ENCODE measurements at regions of chr19 and their contacts with region 1.

Region 1: GRCh38 chr19:17305517-17306284 is at the start of gene MRPL34:
- H3K4me3 ChIP-seq: peak within 1 kb of the TSS; percentile 83
- H3K27ac ChIP-seq: peak within 1 kb of the TSS; percentile 76
- H3K4me1 ChIP-seq: peaks cover 3% of the 10 kb centered on the region
- CTCF ChIP-seq: peak; percentile 100

Region 2: GRCh38 chr19:17183858-17184321 is 121.8 kb before region 1 on chr19:
- CTCF ChIA-PET with region 1: no interaction called
- POLR2A ChIA-PET with region 1: no interaction called
- H3K4me3 ChIP-seq: no peak overlapping the region
- H3K27ac ChIP-seq: no peak overlapping the region
- H3K4me1 ChIP-seq: no peaks in the 10 kb centered on the region
- CTCF ChIP-seq: no peak

Region 3: GRCh38 chr19:17226002-17226933 is 79.4 kb before region 1 on chr19 and contains the start of gene OCEL1:
- CTCF ChIA-PET with region 1: no interaction called
- POLR2A ChIA-PET with region 1: interaction called, 10 read pairs
- H3K4me3 ChIP-seq: peak within 1 kb of the TSS; percentile 76
- H3K27ac ChIP-seq: peak within 1 kb of the TSS; percentile 47; the same call in 1 of the 2 replicates
- H3K4me1 ChIP-seq: no peaks in the 10 kb centered on the region
- CTCF ChIP-seq: no peak; the same call in 1 of the 2 replicates

Region 4: DNA sequence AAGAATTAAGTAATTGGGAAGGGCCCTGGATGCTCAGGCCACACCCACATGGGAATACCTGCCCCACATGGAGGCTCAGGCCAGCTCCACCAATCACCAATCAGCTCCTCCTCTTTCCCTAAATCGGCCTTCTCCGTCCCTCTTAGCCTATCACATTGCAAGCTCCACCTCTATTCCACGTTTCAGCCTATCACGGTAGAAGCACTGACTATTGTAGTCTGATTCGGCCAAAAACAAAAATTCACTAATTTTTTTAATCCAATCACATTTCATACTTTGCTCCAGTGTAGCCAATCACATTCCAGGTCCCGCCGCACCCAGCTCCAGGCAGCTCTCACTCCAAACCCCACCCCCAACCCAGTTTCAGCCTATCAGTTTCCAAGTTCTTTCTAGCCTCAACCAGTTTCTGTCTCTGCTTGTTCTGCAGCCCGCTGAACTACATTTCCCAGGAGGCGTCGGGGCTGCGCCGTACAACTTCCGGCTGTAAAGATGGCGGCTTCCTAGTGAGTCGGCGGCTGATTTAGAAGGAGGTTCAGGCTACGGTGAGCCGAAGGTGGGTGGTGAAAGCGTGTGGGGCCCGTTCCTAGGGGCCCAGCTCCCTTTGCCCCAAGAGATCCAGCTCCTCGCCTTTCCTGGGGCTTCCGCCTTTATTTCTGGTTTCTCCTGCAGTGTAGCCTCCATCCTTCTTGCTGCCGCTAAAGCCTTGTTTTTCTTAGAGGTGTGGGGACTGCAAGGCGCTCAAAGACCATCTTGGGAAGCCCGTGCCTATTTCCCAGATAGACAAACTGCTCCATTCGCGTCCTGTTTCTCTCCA is 38.5 kb before region 1 on chr19 and contains the start of gene BABAM1:
- CTCF ChIA-PET with region 1: no interaction called
- POLR2A ChIA-PET with region 1: interaction called, 16 read pairs
- H3K4me3 ChIP-seq: peak within 1 kb of the TSS; percentile 73
- H3K27ac ChIP-seq: peak within 1 kb of the TSS; percentile 62
- H3K4me1 ChIP-seq: no peaks in the 10 kb centered on the region
- CTCF ChIP-seq: no peak

Region 5: DNA sequence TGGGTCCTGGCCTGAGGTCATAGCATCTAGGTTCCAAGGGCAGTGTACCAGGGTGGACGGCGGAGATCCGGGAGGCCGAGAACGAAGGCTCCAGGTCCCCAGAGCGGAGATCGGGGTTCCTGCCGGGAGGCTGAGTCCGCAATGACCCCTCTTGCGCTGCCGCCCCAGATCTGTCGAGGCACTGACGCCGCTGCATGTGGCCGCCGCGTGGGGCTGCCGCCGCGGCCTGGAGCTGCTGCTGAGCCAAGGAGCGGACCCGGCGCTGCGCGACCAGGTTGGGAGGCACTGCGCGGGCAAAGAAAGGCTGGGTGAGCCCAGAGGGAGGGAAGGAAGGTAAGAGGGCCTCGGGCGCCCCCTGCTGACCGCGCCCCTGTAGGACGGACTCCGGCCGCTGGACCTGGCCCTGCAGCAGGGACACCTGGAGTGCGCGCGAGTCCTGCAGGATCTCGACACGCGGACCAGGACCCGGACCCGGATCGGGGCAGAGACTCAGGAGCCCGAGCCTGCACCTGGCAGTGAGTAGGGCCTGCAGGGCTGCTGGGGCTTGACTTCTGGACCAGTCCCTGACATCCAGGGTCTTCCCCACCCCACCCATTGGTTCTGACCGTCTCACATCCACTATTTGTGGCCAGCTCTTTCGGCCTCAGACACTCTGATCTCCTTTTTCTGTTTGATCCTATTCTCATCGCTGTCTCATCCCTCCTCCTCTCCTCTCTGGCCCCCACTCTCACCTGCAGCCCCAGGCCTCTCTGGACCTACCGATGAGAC is 23.0 kb before region 1 on chr19:
- CTCF ChIA-PET with region 1: interaction called, 6 read pairs
- POLR2A ChIA-PET with region 1: interaction called, 10 read pairs
- H3K4me3 ChIP-seq: no peak overlapping the region
- H3K27ac ChIP-seq: no peak overlapping the region
- H3K4me1 ChIP-seq: no peaks in the 10 kb centered on the region
- CTCF ChIP-seq: peak; percentile 99

Region 6: DNA sequence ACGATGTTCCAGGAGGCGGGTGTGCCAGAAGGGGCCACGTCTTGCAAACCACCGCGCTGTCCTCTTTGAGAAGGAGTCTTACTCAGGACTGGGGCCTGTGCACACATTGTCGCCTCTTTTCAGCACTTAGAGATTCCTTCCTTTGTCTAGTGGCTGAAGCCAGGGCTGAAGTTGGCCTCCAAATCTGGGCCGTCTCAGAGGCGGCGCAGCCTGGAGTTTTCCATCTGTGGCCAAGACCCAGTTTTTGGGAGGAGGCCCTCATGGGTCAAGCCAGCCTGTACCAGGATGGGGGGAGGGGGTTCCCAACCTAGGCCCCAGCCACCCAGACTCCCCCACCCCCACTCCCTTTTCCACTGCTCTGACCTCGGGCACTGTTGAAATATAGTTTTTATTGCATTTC is 17.2 kb after region 1 on chr19:
- CTCF ChIA-PET with region 1: interaction called, 4 read pairs
- POLR2A ChIA-PET with region 1: interaction called, 22 read pairs
- H3K4me3 ChIP-seq: no peak overlapping the region
- H3K27ac ChIP-seq: no peak overlapping the region
- H3K4me1 ChIP-seq: no peaks in the 10 kb centered on the region
- CTCF ChIP-seq: no peak

Region 7: DNA sequence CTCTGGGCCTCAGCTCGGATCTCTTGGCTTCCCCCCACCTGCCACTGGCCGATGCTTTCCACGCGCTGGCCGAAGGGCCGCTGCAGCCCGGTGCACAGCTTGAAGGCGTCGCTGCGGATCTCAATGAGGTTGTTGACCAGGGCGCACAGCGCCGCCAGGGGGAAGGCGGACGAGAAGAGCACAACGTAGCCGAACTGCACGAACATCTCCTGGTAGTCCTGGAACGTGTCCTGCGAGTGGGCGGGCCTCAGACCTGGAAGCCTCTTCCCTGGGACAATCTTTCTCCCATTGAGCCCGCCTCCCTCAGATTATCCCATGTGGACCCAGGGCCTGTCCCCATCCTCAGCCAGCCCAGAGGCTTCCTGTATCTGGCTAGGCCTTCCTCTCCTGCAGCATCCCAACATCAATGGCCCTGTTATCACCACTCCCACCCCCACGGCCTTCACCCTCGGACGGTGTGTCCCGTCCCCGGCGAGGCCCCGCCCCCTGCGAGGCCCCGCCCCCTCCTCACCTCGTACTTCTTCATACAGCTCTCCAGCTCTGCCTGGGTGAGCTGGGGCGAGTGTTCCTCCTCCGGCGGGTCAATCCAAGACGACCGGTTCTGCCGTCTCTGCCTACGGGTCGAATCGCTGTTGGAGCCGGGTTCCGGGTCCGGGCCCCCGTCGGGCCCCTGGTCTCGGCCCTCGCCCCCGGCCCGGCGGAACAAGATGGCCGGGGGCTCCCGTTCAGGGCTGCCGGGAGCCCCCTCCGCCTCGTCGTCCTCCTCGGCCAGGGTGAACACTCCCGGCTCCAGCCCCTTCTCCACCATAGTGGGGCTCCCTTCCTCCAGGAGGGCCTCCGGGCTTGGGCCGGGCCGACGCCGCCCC is 22.2 kb after region 1 on chr19:
- CTCF ChIA-PET with region 1: interaction called, 3 read pairs
- POLR2A ChIA-PET with region 1: interaction called, 64 read pairs
- H3K4me3 ChIP-seq: peak overlapping the region; percentile 28
- H3K27ac ChIP-seq: peak overlapping the region; percentile 53; the same call in 1 of the 2 replicates
- H3K4me1 ChIP-seq: no peaks in the 10 kb centered on the region
- CTCF ChIP-seq: no peak

Region 8: DNA sequence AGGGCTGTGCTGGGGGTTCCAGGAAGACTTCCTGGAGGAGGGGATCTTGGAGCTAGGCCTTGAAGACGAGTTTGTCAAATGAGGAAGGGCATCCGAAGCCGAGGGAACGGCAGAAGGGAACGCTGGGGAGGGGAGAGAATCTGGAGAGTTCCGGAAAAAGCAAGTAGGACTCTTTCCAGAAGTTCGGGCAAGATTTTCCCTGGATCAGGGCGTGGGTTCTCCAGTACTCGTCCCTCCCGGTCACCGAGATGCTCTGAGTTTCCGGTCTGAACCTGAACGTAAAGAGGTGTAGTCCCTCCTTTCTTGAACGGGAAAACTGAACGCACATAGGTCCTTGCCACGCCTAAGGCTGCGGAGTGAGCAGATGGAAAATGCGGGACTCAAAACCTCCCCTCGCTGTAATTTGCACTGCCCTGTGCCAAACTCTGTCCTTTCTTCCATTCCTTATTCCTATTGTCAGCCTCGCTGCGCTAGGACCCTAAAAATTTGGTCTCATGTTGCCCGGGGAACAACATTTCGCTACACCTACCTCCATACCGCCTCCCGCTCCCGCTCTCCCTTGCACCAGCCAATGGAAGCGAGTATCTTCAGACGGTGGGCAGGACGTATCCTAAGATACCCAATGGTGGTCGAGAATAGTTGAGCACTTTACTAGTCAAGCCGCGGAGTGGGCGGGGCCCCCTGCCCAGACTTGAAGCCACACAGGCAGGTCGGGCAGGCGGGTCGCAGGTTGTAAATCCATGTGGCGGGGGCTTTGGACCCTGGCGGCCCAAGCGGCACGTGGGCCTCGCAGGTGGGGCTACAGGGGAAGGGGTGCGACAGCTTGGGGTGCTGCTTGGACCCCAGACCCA is 31.4 kb after region 1 on chr19 and contains the start of gene GTPBP3:
- CTCF ChIA-PET with region 1: interaction called, 9 read pairs
- POLR2A ChIA-PET with region 1: interaction called, 64 read pairs
- H3K4me3 ChIP-seq: peak within 1 kb of the TSS; percentile 74
- H3K27ac ChIP-seq: peak within 1 kb of the TSS; percentile 63
- H3K4me1 ChIP-seq: peaks cover 8% of the 10 kb centered on the region
- CTCF ChIP-seq: peak; percentile 8; the same call in 1 of the 2 replicates

Measured in HEK293 (cell line).